Activated CD4-positive, alpha-beta T cell treated with anti-CD3 and anti-CD28 coated beads for 36 hours (primary cell): ENCODE measurements at regions of chr4 and their contacts with region 1.

Region 1: DNA sequence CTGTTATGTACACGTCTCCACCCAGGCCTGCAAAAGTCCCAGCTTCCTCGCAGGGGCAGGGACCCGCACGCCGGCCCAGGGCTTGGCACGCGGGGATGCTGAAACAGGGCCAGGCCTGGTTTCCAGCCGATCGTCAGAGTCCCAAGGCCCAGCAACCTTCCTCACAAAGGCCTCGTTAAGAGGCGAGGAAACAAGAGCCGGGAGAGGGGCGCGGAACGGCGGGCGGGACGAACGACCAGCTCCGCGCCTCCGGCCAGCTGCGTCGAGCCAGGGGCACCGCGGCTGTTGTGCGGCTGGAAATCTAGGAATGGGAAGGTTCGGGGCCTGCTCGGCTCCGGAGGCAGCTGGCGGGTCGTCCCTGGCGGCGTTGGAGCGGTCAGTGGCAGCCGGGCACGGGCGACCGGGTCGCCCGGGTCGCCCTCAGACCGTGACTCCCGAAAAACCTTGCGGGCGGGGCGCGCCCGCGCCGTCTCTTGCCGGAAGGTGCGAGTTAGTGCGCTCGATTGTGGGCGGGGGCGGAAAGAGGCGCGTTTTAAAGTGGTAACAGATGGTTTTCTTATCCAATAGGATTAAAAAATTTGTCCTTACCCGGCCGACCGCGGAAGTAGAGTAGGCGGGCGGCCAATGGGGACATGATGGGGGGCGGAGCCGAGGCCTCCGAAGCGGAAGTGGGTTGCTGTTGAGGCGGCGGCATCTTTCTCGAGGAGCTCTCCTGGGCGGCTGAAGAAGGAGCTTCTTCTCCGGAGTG is at the start of gene RNF4:
- DNase-seq: peak; percentile 98
- ATAC-seq: peak; percentile 86
- H3K4me3 Mint-ChIP-seq: peak within 1 kb of the TSS; percentile 99
- H3K27ac Mint-ChIP-seq: peak within 1 kb of the TSS; percentile 93
- H3K4me1 Mint-ChIP-seq: peaks cover 42% of the 10 kb centered on the region
- H3K27me3 Mint-ChIP-seq: no peaks in the 10 kb centered on the region
- total RNA-seq, gene RNF4: 87.5 to 94.1 TPM

Region 2: DNA sequence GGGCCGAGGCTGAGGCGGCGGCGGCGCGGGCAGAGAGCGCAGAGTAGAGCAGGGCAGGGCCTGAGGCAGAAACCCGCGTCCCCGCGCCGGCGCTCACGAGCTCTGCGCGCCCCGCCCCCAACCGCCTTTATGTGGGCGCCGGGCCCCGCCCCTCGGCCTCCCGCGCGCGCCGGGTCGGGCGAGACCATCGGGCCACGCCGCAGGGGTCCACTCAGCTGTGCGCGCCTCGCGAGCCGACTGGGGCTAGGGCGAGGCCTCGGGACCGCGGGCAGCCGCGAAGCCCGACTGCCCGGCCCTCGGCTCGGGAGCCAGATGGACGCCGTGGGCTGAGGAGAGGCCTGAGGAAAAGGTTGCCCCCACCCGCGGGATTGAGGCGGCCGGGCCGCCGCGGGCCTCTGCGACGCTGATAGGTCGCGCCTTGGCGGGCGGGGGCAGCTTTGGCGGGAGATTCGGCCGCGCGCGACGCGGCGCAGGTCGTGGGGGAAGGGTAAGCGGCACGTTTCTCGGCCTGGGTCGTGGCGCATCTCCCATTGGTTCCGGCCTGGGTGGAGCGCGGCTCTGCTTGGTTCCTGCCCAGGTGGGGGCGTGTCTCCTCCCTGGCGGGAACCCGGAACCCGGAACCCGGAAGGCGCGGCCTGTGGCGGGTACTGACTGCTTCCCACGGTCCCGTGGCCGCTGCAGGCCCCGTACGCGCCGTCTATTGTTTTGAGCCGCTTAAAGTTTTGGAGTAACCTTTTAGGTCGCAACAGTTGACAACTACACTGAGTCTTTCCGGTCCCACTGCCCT is 756.2 kb before region 1 on chr4 and contains the start of gene SLBP:
- CTCF ChIA-PET with region 1: no interaction called
- POLR2A ChIA-PET with region 1: no interaction called
- intact Hi-C with region 1: loop called in 1 of 2 experiments (anchors 1 kb)
- DNase-seq: peak; percentile 100
- ATAC-seq: peak; percentile 89
- H3K4me3 Mint-ChIP-seq: peak within 1 kb of the TSS; percentile 99
- H3K27ac Mint-ChIP-seq: peak within 1 kb of the TSS; percentile 98
- H3K4me1 Mint-ChIP-seq: peaks cover 58% of the 10 kb centered on the region
- H3K27me3 Mint-ChIP-seq: no peaks in the 10 kb centered on the region
- total RNA-seq, gene SLBP: 113 to 134 TPM

Region 3: DNA sequence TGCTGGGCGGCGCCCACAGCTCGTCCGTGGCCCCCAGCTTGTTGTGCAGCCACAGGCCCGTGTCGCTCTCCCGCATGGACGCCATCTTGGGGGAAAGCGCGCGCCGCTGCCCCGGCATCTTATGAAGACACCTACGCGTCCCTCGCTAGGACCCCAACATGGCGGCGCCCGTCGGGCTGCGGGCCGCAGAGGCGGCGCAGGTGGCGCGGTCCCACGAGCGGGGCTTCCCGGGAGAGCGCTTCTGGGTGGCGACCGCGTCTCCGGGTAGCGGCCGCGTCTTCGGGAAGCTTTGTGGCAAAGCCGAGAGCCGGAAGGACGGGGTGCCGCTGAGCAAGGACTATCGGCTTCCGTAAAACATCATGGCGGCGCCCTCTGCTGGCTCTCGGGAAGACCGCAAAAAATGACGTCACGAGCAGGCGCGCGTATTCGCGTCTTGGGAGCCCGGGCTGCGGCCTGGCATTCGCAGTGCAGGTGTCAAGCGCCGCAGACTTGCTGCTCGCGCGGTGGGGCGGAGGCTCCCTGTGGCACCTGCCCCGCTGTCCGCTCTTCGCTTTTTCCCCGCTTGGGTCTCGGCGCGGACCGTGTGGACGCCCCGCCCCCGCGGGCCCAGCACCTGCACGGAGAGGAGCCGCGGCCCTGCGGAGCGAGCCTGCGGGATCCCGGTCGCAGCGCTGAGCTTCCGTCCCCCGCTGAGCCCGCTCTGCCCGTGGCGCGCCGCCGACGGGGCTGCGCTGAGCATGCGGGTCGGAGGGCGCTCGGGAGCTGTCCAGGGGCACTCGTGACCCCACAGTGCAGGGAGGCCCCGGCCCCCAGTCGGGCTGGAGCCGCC is 459.5 kb before region 1 on chr4 and contains the start of gene NELFA:
- CTCF ChIA-PET with region 1: no interaction called
- POLR2A ChIA-PET with region 1: interaction called, 3 read pairs
- intact Hi-C with region 1: loop called (anchors 1 to 2 kb)
- DNase-seq: peak; percentile 97
- ATAC-seq: peak; percentile 81
- H3K4me3 Mint-ChIP-seq: peak within 1 kb of the TSS; percentile 87
- H3K27ac Mint-ChIP-seq: peak within 1 kb of the TSS; percentile 90
- H3K4me1 Mint-ChIP-seq: peaks cover 34% of the 10 kb centered on the region
- H3K27me3 Mint-ChIP-seq: no peaks in the 10 kb centered on the region
- total RNA-seq, gene NELFA: 41.6 to 48.3 TPM

Region 4: DNA sequence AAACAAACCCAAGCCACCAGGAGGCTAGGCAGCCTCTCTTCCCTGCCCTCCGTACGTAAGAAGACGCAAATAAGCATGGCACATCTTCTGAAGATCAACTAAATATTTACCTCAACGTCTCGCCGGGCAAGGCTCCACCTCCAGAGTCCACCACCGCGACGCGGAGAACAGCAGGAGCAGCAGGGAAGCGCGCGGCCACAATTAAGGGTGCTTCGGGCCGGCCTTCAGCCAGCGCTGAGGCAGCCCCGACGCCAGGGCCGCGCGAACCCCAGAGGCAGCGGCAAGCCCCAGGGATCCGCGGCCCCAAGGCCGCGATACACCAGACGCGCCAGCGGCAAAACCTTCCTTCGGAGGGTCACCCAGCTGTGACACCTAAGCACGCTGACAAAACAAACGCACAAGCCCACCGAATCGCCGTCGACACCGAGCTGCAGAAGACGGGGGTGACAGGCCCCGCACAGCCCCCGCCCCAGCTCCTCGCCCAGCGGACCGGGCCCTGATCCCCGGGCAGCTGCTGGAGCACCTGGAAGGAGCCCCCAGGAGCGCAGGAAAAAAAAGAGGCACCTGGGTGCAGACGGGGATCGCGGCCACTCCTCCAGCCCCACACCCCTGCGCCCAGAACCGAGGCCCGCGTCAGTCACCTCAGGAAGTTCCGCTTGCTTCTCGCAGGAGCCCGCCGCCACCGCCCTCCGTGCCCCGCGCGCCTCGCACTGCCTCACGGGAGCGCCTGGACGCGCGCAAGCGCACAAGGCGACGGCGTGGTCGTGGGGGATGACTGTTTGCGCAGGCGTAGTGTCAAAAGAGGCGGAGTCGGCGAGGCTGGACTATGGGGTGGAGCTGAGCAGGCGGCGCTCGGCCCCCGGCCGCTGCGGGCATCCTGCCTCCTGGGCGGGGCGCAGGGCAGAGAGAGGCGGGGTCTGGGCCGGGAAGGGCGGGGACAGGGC is 226.9 kb before region 1 on chr4 and contains the starts of genes HAUS3 and POLN:
- CTCF ChIA-PET with region 1: interaction called, 6 read pairs
- POLR2A ChIA-PET with region 1: interaction called, 3 read pairs
- intact Hi-C with region 1: loop called (anchors 1 kb)
- DNase-seq: peak; percentile 99
- ATAC-seq: peak; percentile 97
- H3K4me3 Mint-ChIP-seq: peak within 1 kb of the TSS; percentile 91
- H3K27ac Mint-ChIP-seq: peak within 1 kb of the TSS; percentile 88
- H3K4me1 Mint-ChIP-seq: peaks cover 54% of the 10 kb centered on the region
- H3K27me3 Mint-ChIP-seq: no peaks in the 10 kb centered on the region
- total RNA-seq, gene HAUS3: 14.6 to 18.6 TPM
- total RNA-seq, gene POLN: 2.3 to 3.2 TPM

Region 5: DNA sequence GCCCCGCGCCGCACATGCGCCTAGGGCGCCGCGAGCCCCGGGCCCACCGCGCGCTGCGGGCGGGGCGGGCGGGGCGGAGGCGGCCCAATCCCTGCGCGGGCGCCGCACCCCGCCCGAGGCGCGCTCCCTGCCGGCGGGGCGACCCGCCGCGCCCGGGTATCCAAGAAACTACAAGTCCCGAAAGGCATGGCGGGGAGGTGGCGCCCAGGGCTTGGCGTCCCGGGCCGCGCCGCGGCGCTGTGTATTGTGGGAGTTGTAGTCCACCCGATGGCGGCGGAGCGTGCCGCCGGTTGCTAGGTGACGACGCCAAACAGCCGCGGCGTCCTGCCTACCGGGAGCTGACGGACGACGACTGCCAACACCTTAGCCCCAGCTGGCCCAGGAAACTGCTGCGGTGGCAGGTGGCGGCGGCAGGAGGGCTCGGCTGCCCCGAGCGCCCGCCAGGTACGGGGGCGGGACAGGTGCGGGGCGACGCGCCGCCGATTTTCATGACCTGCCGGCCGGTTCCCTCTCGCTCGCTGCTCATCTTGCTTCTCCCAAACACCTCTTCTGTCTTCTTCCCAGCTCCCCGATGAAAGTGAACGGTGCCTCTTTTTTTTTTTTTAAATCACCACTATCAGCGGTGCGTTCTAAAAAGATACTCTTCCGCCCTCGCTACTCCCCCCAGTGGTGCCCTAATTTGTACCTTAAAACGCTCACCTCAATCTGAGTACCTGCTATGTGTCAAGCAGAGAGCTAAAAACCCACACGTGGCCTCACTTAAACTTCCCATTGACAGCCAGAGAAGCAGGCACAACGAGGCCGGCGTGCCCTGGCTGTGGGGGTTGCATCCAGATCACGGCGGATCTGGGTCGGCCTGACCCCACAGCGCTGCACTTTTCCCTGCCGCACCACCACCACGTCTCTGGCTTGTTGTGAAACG is 49.7 kb before region 1 on chr4 and contains the start of gene CFAP99:
- CTCF ChIA-PET with region 1: interaction called, 6 read pairs
- POLR2A ChIA-PET with region 1: no interaction called
- intact Hi-C with region 1: loop called (anchors 1 to 2 kb)
- DNase-seq: peak; percentile 99
- ATAC-seq: peak; percentile 93
- H3K4me3 Mint-ChIP-seq: peak within 1 kb of the TSS; percentile 82
- H3K27ac Mint-ChIP-seq: peak within 1 kb of the TSS; percentile 68
- H3K4me1 Mint-ChIP-seq: peaks cover 39% of the 10 kb centered on the region
- H3K27me3 Mint-ChIP-seq: peaks cover 27% of the 10 kb centered on the region
- total RNA-seq, gene CFAP99: 0.05 TPM in 1 of 2 experiments, not detected in the other

Region 6: DNA sequence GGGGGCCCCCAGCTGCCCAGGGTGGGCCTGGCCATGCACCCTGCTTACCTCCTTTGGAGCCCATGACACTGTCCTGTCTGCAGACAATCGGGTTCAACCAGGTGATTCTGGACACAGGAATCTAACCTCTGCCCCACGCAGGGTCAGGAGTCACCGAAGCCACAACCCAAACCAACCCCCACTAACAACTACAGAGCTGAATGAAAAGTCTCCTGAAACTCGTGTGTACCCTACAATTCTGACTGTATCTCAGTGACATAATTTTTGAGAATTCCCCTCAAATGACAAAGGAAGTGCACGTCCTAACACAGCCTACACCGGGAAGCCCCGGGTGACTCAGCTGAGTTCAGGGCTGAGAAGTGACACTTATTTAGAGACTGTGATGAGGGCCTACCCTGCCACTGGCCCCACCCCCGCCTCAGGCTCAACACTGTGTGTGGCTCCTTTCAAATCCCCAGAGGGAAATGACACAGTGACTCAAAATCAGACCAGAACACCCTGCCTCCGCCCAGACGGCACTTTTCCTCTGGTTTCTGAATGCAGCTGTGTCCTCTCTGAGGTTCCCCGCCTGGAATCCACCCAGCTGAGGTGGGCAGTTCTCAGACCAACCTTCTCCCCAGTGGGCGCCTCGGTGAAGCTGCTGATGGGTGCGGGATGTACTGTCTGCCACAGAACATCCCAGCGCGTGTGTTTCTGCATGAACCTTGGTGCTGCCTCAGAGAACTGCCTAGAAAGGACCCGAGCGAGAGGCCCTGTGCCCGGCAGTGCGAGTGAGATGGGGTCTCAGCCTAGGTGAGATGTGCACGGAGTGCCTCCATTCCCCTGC is 277.6 kb after region 1 on chr4:
- CTCF ChIA-PET with region 1: interaction called, 3 read pairs
- POLR2A ChIA-PET with region 1: no interaction called
- intact Hi-C with region 1: loop called in 1 of 2 experiments (anchors 2 kb)
- DNase-seq: peak; percentile 98
- ATAC-seq: peak; percentile 97
- H3K4me3 Mint-ChIP-seq: peak overlapping the region; percentile 62
- H3K27ac Mint-ChIP-seq: peak overlapping the region; percentile 97
- H3K4me1 Mint-ChIP-seq: peaks cover 58% of the 10 kb centered on the region
- H3K27me3 Mint-ChIP-seq: no peaks in the 10 kb centered on the region

Region 7: DNA sequence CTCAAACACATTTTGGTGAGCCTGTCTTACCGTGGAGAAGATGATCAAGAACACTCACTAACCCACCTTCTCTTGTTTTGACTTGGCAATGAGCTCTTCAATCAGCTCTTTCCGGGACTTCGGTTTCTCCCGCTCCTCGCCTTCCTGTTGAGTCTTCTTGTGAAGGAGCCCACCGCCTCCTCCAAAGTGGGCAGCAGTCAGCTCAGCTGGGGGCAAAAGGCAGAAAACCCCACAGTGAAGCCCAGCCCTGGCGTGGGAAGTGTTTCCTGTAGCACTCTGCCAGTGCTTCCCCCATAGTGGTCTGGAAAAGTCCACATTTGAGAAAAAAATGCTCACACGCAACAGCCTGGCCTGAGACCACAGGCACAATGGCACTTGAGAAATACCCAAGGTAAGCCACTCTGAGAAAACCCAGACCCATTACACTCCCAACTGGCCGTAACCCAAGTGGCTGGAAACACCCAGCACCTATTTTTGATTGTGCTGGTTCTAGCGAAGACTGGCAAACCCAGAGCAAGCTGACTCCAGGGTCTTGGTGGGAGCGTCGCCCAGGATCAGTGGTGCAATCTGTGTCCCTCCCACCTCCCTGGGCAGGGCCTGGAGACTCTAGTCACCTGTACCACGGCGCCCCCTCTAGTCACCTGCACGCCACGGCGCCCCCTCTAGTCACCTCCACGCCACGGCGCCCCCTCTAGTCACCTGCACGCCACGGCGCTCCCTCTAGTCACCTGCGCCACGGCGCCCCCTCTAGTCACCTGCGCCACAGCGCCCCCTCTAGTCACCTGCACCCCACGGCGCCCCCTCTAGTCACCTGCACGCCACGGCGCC is 486.0 kb after region 1 on chr4:
- CTCF ChIA-PET with region 1: no interaction called
- POLR2A ChIA-PET with region 1: interaction called, 4 read pairs
- intact Hi-C with region 1: loop called in 1 of 2 experiments (anchors 1 kb)
- DNase-seq: peak; percentile 88
- ATAC-seq: peak; percentile 83
- H3K4me3 Mint-ChIP-seq: peak overlapping the region; percentile 51
- H3K27ac Mint-ChIP-seq: peak overlapping the region; percentile 90
- H3K4me1 Mint-ChIP-seq: peaks cover 69% of the 10 kb centered on the region
- H3K27me3 Mint-ChIP-seq: no peaks in the 10 kb centered on the region

Region 8: DNA sequence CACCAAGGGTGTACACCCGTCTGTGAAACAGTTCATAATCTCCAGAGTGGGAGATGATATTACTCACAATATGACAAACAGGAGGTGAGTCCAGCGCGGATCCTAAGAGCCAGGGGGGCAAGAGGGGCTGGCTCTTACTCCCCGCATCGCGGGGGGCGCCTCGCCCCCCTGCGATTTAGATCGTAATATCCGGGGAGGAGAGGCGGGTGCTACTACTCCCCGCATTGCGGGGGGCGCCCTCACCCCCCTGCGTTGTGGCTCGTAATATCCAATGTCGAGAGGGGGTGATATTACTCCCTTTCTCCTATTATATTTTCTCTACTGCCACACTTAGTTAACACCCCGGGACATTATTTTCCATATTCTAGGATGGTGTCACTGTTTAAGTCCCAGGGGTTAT is 1429.5 kb after region 1 on chr4:
- CTCF ChIA-PET with region 1: no interaction called
- POLR2A ChIA-PET with region 1: no interaction called
- intact Hi-C with region 1: no loop called
- DNase-seq: no peak
- ATAC-seq: no peak
- H3K4me3 Mint-ChIP-seq: no peak overlapping the region
- H3K27ac Mint-ChIP-seq: no peak overlapping the region
- H3K4me1 Mint-ChIP-seq: no peaks in the 10 kb centered on the region
- H3K27me3 Mint-ChIP-seq: peaks cover 12% of the 10 kb centered on the region